HEK293 (cell line): ENCODE measurements at regions of chr1 and their contacts with region 1.

Region 1: DNA sequence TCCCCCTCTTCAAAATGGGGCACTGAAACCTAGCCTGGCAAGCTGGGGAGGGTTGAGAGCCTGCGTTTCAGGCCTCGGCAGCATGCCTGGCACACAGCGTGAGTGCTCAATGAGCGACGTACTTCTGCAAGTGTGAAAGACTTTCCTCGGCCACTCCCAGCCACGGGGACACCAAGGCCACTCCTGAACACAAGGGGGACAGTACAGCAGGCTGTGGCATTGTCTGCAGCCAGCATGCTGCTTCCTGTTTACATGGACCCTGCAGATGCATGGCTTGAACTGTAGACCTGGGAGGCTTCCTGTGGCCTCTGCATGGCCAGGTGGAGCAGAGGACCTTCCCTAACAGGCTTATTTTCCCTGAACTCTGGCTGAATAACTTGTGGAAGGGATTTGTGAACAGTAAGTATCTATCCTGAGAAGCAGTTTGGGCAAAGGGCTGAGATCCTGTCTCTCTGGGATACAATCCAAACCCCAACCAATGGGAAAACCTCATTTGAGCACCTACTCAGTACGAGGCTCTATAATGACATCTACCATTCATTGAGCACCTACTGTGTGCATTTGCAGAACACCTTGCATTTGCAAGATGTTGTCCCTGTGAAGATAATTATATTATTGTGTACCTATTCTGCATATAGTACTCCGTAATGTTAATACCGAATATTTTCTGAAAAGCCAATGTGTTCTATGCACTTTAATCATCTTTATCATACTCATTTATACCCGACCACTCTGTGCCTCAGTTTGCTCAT is 9.9 kb upstream of the HSPG2 start:
- H3K4me3 ChIP-seq: no peak overlapping the region
- H3K27ac ChIP-seq: no peak overlapping the region
- H3K4me1 ChIP-seq: no peaks in the 10 kb centered on the region
- CTCF ChIP-seq: peak; percentile 16; the same call in 1 of the 2 replicates

Region 2: GRCh38 chr1:21936366-21937031 is 10.5 kb before region 1 on chr1:
- CTCF ChIA-PET with region 1: interaction called, 8 read pairs
- POLR2A ChIA-PET with region 1: interaction called, 12 read pairs
- H3K4me3 ChIP-seq: peak overlapping the region; percentile 36
- H3K27ac ChIP-seq: no peak overlapping the region
- H3K4me1 ChIP-seq: 0 out of 2 replicates have a peak, but pooled peaks cover 3% of the 10 kb centered on the region
- CTCF ChIP-seq: no peak